GM18951 (cell line): ENCODE measurements at regions of chr4 and their contacts with region 1.

Region 1: DNA sequence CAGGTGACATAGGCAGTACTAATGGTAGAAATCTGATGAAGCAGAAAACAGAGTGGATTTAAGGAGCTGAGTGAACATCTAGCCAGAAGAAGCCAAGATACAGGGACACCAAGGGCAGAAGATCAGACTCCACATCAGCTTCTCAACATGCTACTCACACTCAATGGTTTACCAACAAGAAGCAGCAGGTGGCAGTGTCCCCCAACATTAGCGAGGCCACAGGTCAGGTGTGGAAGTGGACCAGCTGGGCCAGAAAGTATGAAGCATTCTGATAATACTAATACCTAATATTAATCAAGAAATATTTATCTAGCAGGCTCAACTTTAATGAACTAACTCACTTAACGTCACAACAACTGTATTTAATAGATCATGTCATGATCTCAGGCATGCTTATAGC is 73.4 kb upstream of the TTC29 start:
- POLR2A ChIP-seq: no peak

Region 2: GRCh38 chr4:147103403-147103946 is 84.4 kb after region 1 on chr4:
- in situ Hi-C with region 1: loop called (anchors 10 kb)
- POLR2A ChIP-seq: no peak

Region 3: DNA sequence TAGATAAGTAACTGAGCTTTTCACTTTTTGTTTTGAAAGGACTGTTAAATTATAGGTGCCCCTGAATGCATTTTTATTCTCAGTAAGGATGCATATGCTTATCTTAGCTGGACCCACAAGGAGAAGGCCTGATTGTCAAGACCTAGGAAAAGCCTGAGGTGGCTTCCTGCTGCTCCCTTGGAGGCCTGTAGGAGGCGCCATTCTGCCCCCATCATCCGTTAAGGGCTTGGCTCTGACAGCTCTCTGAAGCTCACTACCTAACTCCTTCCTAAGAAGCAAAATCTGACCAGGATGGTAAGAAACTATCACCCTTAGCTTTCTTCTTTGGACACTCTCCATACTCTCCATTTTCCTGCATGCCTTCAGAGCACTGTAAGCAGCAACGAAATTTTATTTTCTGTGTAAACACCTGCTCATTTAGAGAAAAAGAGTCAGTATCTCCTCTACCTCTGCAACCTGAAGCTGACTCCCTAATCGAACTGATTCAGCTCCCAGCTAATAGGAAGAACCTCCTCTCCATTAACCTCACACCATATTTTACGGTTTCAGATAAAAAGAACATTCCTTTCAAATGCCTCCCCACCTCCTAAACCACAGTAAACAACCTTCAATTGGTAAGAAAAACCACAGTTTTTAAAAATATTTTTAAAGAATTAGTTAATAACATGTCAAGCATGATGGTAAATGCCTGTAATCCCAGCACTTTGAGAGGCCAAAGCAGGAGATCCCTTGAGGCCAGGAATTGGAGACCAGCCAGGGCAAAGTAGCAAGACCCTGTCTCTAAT is 388.4 kb after region 1 on chr4:
- in situ Hi-C with region 1: no loop called
- POLR2A ChIP-seq: no peak